Activated CD8-positive, alpha-beta T cell treated with anti-CD3 and anti-CD28 coated beads, Interleukin-2, amount 10 ng/mL, durations not matched to agents 7 days and 5 days (primary cell): ENCODE measurements at regions of chr12 and their contacts with region 1.

Region 1: GRCh38 chr12:48988030-48988649 is 10.0 kb downstream of the WNT1 start:
- DNase-seq: peak; percentile 84
- ATAC-seq: peak; percentile 81
- H3K4me3 Mint-ChIP-seq: no peak overlapping the region
- H3K27ac Mint-ChIP-seq: no peak overlapping the region
- H3K4me1 Mint-ChIP-seq: peaks cover 8% of the 10 kb centered on the region
- H3K27me3 Mint-ChIP-seq: peaks cover 65% of the 10 kb centered on the region

Region 2: DNA sequence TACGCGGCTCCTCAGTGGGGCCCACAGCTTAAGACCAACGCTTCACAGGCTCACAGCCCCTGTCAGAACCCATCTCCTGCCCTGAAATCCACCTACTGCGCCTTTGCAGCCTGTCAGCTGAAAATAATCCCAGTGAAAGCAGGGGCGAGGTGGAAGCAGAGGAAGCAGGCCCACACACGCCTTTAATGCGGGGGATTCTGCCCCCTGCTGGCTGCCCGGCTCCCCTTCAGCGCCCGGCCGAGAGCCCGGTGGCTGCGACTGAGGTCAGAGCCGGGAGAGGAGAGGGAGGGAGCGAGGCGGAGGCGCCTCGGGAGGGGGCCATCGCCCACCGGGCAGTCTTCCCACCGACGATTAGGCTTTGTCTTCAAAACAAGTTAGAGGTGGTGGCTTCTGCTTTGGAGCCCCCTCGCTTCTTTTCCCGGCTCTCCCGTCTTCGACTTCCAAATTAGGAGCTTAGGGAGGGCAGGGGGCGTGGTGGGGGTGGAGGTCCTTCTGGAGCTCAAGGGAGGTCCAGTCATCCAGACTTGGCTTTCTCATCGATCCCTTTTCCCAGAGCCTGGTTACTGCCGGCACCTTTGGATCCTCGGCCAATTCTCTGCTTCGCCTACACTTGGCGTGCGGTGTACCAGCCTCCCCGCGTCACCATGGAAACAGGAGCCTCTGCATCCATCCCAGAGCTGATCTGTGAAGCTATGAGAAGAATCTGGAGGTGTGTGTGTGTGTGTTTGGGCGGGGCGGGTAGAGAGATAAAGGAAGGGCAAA is 97.3 kb before region 1 on chr12:
- CTCF ChIA-PET with region 1: interaction called, 17 read pairs
- POLR2A ChIA-PET with region 1: no interaction called
- DNase-seq: peak; percentile 81
- ATAC-seq: peak; percentile 98
- H3K4me3 Mint-ChIP-seq: no peak overlapping the region
- H3K27ac Mint-ChIP-seq: no peak overlapping the region
- H3K4me1 Mint-ChIP-seq: peaks cover 8% of the 10 kb centered on the region
- H3K27me3 Mint-ChIP-seq: peaks cover 15% of the 10 kb centered on the region

Region 3: GRCh38 chr12:48910196-48910595 is 77.9 kb before region 1 on chr12:
- CTCF ChIA-PET with region 1: interaction called, 10 read pairs
- POLR2A ChIA-PET with region 1: no interaction called
- DNase-seq: no peak
- ATAC-seq: no peak
- H3K4me3 Mint-ChIP-seq: no peak overlapping the region
- H3K27ac Mint-ChIP-seq: no peak overlapping the region
- H3K4me1 Mint-ChIP-seq: no peaks in the 10 kb centered on the region
- H3K27me3 Mint-ChIP-seq: peaks cover 9% of the 10 kb centered on the region

Region 4: DNA sequence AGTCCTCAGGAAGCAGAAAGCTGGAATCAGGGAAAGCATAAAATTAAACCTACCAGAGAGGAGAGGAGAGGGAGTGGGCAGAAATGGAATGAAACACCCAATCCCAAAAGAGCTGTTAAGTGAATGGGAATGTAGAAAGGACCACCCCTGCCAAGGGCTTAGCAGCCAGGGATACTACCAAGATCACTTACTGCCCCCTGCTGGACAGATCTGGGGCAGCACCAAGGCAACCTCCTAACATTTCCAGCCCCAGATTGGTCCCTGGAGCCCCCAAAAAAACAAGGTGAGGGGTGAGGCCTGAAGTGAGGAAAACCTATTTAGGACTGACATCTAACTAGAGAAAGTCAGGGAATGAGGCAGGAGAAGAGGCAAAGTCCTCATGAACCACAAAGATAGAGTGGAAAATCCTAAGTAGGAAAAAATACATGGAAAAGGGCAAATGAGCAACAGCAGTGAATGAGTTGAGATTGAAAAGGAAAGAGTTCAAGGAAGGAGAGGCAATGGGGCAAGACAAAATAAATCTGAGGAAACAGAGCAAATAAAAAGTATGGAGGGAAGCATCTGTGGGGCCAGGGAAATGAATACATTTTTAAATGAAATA is 51.7 kb before region 1 on chr12:
- CTCF ChIA-PET with region 1: interaction called, 15 read pairs
- POLR2A ChIA-PET with region 1: no interaction called
- DNase-seq: peak; percentile 88
- ATAC-seq: peak; percentile 60
- H3K4me3 Mint-ChIP-seq: no peak overlapping the region
- H3K27ac Mint-ChIP-seq: no peak overlapping the region
- H3K4me1 Mint-ChIP-seq: peaks cover 26% of the 10 kb centered on the region
- H3K27me3 Mint-ChIP-seq: no peaks in the 10 kb centered on the region

Region 5: DNA sequence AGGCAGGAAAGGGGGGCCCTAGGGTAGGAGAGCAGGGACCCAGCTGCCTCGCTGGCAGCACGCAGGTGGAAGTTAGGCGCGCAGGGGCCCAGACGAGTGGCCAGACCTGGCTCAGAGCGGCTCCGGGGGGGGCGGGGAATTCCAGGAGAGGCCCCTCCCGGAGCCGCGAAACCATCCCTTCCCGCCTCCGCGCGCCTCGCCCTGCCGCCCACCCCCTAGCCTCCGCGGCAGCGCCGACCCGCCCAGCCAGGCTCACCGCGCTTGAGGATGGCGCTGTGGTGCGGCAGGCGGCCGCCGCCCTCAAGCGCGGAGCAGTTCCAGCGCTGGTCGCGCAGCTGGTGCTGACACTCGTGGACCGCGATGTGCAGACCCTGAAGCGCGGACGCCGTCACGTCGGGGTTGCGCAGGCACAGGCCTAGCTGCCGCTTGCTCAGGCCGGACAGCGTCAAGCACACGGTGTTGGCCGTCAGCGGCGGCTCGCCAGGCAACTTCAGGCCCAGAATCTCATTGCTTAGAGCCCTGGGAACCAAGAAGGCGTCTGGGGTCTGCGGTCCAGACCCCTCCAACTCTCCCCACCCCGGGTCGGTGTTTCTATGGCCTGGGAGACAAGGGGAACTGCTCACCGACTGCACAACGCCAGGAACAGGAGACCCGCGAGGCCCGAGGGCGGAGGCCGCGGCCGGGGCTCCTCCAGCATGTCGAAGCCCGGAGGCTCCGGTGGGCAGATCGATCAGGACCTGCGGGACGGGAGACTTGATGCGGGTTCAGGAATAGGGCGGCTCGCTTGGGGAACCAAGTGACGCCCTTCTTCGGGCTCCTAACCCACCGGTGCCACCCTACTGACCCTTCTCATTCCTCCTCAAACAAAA is 18.1 kb before region 1 on chr12:
- CTCF ChIA-PET with region 1: interaction called, 42 read pairs
- POLR2A ChIA-PET with region 1: no interaction called
- DNase-seq: no peak
- ATAC-seq: peak; percentile 50
- H3K4me3 Mint-ChIP-seq: no peak overlapping the region
- H3K27ac Mint-ChIP-seq: no peak overlapping the region
- H3K4me1 Mint-ChIP-seq: peaks cover 37% of the 10 kb centered on the region
- H3K27me3 Mint-ChIP-seq: peaks cover 68% of the 10 kb centered on the region

Region 6: DNA sequence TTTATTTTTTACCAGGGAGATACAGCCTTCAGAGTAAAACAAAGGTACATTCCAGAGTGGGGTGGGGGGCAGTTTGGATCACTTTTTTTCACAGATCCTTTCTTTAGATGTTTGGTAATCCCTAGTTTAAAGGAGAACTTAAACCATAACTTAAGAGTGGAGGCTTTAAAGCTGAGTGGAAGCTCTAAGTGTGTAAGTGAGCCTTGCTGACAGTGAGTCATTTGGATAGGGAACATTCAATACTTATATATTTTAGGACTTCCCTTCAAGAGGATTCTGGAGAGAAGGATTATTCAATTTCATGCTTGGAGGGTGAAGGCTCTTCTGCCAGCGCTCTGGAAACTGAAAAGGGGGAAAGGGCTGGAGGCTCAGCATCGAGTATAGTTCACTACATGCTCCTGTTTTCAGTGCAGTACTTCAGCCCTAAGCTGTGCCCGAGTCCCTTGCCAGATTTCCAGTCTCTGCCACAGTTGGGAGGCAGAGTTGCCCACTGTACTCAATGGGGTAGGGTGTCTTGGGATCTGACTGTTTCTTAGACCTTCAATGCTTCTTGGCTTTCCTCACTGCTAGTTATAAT is 22.0 kb after region 1 on chr12:
- CTCF ChIA-PET with region 1: interaction called, 39 read pairs
- POLR2A ChIA-PET with region 1: no interaction called
- DNase-seq: no peak
- ATAC-seq: no peak
- H3K4me3 Mint-ChIP-seq: no peak overlapping the region
- H3K27ac Mint-ChIP-seq: no peak overlapping the region
- H3K4me1 Mint-ChIP-seq: no peaks in the 10 kb centered on the region
- H3K27me3 Mint-ChIP-seq: no peaks in the 10 kb centered on the region

Region 7: DNA sequence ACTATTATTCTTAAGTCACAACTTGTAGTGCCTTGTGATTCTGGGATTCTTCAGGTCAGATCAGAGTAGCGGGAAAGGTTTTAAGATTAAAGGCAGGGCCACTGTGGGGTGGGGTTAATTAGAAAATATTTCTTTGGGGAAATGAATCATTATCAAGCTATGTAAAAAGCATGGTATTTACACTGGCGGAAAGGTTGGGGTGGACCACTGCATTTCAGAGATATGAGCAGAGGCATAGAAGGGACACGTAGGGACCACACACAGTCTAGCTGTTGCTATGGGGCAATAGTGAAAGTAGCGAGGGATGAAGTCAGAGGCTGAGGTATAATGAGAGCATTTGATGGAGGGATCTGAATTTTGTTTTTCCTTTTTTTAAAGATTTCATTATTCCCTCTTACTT is 519.0 kb after region 1 on chr12:
- CTCF ChIA-PET with region 1: no interaction called
- POLR2A ChIA-PET with region 1: no interaction called
- DNase-seq: no peak
- ATAC-seq: no peak
- H3K4me3 Mint-ChIP-seq: no peak overlapping the region
- H3K27ac Mint-ChIP-seq: no peak overlapping the region
- H3K4me1 Mint-ChIP-seq: peaks cover 4% of the 10 kb centered on the region
- H3K27me3 Mint-ChIP-seq: no peaks in the 10 kb centered on the region